Naive thymus-derived CD4-positive, alpha-beta T cell (primary cell): ENCODE measurements at regions of chr10 and their contacts with region 1.

Region 1: GRCh38 chr10:21078410-21079329 is 181.6 kb upstream of the NEBL start:
- DNase-seq: no peak
- ATAC-seq: no peak
- H3K4me3 ChIP-seq: no peak overlapping the region
- H3K4me3 Mint-ChIP-seq: no peak overlapping the region
- H3K27ac ChIP-seq: no peak overlapping the region
- H3K27ac Mint-ChIP-seq: peak overlapping the region in 1 of 9 donors; percentile 87
- H3K4me1 ChIP-seq: no peaks in the 10 kb centered on the region
- H3K4me1 Mint-ChIP-seq: no peaks in the 10 kb centered on the region
- H3K27me3 ChIP-seq: no peaks in the 10 kb centered on the region
- H3K27me3 Mint-ChIP-seq: peaks cover 0 to 10% (median 3%) of the 10 kb centered on the region in 5 donors

Region 2: DNA sequence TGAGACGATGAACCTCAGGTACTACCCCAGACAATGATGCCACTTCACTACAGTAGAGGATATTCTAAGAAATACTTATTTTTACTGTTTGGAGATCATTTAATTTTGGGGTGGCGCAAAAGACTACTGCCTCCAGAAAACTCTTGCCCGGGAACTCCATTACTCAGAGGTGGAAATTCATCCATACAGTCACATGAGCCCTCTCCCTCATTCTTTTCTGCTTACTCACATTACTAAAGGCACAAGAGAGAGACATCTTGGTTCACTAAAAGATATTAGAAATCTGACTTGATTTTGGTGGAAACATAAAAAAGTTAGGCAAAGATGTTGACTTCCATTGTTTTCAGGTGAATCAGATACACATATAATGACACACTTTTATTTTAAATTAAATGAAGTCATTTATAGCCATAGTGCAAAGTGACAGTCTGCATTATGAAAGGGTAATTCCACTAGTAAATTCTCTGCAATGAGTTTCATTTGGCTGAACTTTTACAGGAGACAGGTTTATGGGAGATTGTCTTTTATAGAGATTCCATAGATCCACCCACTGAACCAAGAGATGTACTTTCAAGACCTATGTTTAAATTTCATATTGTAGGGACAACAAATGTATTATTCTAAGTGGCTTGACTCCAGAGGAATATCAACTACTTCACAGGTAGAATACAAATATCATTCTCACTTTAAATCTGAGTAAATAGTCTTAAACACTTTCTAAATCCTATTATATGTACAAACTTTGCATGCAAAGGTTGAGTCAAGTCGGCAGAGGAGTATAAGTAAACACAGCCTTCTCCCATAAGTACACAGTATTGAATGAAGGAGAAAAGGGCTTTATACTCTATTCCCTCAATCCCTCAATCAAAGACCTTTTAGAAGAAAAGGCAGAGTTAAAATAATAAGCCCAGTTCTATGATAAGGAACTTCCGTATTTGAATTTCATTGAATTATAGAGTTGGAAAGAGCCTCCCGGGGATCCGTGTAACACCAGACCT is 200.4 kb before region 1 on chr10:
- CTCF ChIA-PET with region 1: no interaction called
- POLR2A ChIA-PET with region 1: no interaction called
- intact Hi-C with region 1: no loop called
- DNase-seq: no peak
- ATAC-seq: no peak
- H3K4me3 ChIP-seq: no peak overlapping the region
- H3K4me3 Mint-ChIP-seq: peak overlapping the region in 1 of 10 donors; percentile 12
- H3K27ac ChIP-seq: no peak overlapping the region
- H3K27ac Mint-ChIP-seq: no peak overlapping the region
- H3K4me1 ChIP-seq: no peaks in the 10 kb centered on the region
- H3K4me1 Mint-ChIP-seq: no peaks in the 10 kb centered on the region
- H3K27me3 ChIP-seq: no peaks in the 10 kb centered on the region
- H3K27me3 Mint-ChIP-seq: peaks cover 0 to 16% (median 4%) of the 10 kb centered on the region in 5 donors

Region 3: DNA sequence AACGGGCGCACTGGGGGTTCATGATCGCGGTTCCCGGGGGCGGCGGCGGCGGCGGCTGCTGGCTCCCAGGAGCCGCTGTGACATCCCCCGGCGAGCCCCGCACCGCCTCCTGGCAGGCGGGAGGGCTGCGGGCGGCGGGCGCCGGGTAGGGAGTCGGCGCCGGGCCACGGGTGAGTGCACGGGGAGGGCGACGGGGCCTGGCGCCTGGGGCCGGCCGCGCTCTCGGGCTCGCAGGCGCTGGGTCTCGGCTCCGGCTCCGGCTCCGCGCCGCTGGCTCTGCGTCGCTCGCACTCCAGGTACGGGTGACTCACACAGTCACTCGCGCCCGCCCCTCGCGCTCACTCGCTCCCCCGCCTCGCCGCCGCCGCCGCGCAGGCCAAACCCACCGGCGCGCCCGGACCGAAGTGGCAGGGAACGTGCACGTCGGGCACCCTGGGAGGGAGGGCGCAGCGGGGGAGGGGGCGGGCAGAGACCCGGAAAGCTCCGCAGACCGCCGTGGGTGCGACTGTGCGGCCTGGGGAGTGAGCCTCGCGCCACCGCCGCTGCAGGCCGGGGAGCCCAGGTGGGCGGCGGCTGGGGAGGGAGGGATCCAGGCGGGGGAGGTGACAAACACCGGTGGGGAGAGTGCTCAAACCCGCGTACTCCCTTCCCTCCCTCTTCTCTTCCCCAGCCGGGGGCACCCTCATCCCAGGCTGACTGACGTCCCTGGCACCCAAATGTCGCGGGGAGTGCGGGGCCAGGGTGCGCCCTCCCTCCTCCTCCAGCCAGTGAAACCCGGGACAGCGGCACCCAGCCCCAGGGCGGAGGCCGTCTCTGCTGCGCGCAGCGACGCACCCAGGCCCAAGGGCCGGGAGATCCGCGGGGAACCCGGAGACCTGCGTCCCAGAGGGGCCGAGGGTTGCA is 95.4 kb after region 1 on chr10:
- CTCF ChIA-PET with region 1: no interaction called
- POLR2A ChIA-PET with region 1: no interaction called
- intact Hi-C with region 1: no loop called
- DNase-seq: peak in 1 of 9 donors; percentile 34
- ATAC-seq: peak; percentile 20
- H3K4me3 ChIP-seq: no peak overlapping the region
- H3K4me3 Mint-ChIP-seq: peak overlapping the region in 6 of 10 donors; percentile 48 to 80 (median 60)
- H3K27ac ChIP-seq: no peak overlapping the region
- H3K27ac Mint-ChIP-seq: no peak overlapping the region
- H3K4me1 ChIP-seq: peaks cover 0 to 4% of the 10 kb centered on the region in 2 donors
- H3K4me1 Mint-ChIP-seq: peaks cover 5 to 23% (median 13%) of the 10 kb centered on the region in 7 donors
- H3K27me3 ChIP-seq: peaks cover 0 to 3% of the 10 kb centered on the region in 2 donors
- H3K27me3 Mint-ChIP-seq: peaks cover 57 to 69% (median 65%) of the 10 kb centered on the region in 5 donors

Region 4: GRCh38 chr10:21732067-21732772 is 653.5 kb after region 1 on chr10:
- CTCF ChIA-PET with region 1: no interaction called
- POLR2A ChIA-PET with region 1: no interaction called
- intact Hi-C with region 1: loop called in 1 of 2 experiments (anchors 5 kb)
- DNase-seq: peak in 6 of 9 donors; percentile 27 to 48 (median 34)
- ATAC-seq: peak; percentile 76
- H3K4me3 ChIP-seq: no peak overlapping the region
- H3K4me3 Mint-ChIP-seq: no peak overlapping the region
- H3K27ac ChIP-seq: no peak overlapping the region
- H3K27ac Mint-ChIP-seq: peak overlapping the region in 4 of 9 donors; percentile 3 to 77 (median 60)
- H3K4me1 ChIP-seq: peaks cover 0 to 19% of the 10 kb centered on the region in 2 donors
- H3K4me1 Mint-ChIP-seq: peaks cover 19 to 42% (median 35%) of the 10 kb centered on the region in 7 donors
- H3K27me3 ChIP-seq: no peaks in the 10 kb centered on the region
- H3K27me3 Mint-ChIP-seq: no peaks in the 10 kb centered on the region

Region 5: GRCh38 chr10:21764466-21765189 is 686.0 kb after region 1 on chr10:
- CTCF ChIA-PET with region 1: no interaction called
- POLR2A ChIA-PET with region 1: no interaction called
- intact Hi-C with region 1: no loop called
- DNase-seq: peak in 7 of 9 donors; percentile 55 to 84 (median 78)
- ATAC-seq: peak; percentile 93
- H3K4me3 ChIP-seq: no peak overlapping the region
- H3K4me3 Mint-ChIP-seq: peak overlapping the region; percentile 17 to 78 (median 62)
- H3K27ac ChIP-seq: peak overlapping the region; percentile 56
- H3K27ac Mint-ChIP-seq: peak overlapping the region; percentile 83 to 96 (median 93)
- H3K4me1 ChIP-seq: peaks cover 0 to 17% of the 10 kb centered on the region in 2 donors
- H3K4me1 Mint-ChIP-seq: peaks cover 8 to 30% (median 19%) of the 10 kb centered on the region in 7 donors
- H3K27me3 ChIP-seq: no peaks in the 10 kb centered on the region
- H3K27me3 Mint-ChIP-seq: no peaks in the 10 kb centered on the region